MCF 10A (cell line): ENCODE measurements at regions of chr20 and their contacts with region 1.

Region 1: DNA sequence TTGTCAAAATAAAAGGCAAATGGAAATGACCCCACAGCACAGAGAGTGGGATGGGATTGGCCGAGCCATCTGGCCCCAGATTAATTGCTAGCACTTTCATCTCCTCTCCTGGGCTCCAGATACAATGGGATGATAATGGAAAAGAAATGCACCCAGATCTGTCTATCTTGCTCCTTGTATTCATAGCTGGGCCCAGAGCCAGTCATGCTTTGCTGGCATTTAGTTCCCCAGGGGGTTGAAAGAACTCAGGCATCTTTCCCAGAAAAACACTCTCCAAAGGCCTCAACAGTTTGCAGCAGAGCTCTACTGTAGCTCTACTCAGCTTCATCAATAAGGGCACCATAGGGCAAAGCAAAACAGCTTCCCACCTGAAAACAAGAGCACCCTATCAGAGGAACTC is 116.0 kb upstream of the FOXA2 start:
- DNase-seq: peak; percentile 57
- H3K4me3 Mint-ChIP-seq: no peak overlapping the region
- H3K27ac Mint-ChIP-seq: no peak overlapping the region
- H3K4me1 Mint-ChIP-seq: peaks cover 20% of the 10 kb centered on the region
- H3K27me3 Mint-ChIP-seq: no peaks in the 10 kb centered on the region
- CTCF ChIP-seq: no peak

Region 2: DNA sequence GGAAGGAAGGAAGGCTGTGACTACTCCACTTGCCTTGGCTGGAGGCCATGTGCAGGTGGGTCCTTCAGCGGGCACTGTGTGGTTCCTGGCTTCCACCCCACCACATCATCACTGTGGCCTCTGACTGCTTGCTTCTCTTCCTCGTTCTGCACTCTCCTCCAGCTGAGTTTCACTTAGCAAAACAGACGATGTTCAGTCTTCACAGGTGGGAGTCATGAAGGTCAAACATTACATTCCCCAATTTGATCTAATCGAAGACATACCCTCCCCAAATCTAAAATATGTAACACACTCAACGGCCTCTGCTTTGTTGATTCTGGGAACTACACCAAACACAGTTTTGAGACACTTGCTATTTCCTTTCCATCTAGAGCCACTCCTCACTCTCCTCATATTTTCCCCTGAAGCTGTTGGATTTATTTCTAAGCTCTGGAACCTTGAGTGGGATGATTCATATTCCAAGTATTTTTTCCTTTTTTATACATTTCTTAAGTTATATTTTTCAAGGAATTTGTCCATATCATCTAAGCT is 16.5 kb after region 1 on chr20:
- CTCF ChIA-PET with region 1: interaction called, 182 read pairs
- POLR2A ChIA-PET with region 1: interaction called, 3 read pairs
- intact Hi-C with region 1: no loop called
- DNase-seq: no peak
- H3K4me3 Mint-ChIP-seq: no peak overlapping the region
- H3K27ac Mint-ChIP-seq: peak overlapping the region; percentile 10
- H3K4me1 Mint-ChIP-seq: peaks cover 16% of the 10 kb centered on the region
- H3K27me3 Mint-ChIP-seq: no peaks in the 10 kb centered on the region
- CTCF ChIP-seq: no peak

Region 3: DNA sequence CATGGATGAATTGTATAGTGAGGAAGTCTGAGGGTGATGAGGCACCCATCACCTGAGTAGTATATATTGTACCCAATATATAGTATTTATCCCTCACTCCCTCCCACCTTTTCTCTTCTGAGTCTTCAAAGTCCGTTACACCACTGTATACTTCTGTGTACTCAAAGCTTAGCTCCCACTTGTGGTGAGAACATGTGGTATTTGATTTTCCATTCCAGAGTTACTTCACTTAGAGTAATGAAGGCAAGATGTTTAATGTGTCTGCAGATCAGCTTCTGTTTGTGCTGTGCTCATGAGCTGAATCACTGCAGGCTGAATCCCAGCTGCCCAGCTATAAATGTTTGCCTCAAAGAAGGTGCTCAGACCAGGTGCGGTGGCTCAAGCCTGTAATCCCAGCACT is 23.3 kb after region 1 on chr20:
- CTCF ChIA-PET with region 1: interaction called, 182 read pairs
- POLR2A ChIA-PET with region 1: interaction called, 5 read pairs
- intact Hi-C with region 1: no loop called
- DNase-seq: no peak
- H3K4me3 Mint-ChIP-seq: no peak overlapping the region
- H3K27ac Mint-ChIP-seq: no peak overlapping the region
- H3K4me1 Mint-ChIP-seq: peaks cover 7% of the 10 kb centered on the region
- H3K27me3 Mint-ChIP-seq: no peaks in the 10 kb centered on the region
- CTCF ChIP-seq: no peak